ENCODE measurements at regions of chr3 and their contacts with region 1.

Region 1: GRCh38 chr3:160027541-160028195 is 39.0 kb downstream of the IL12A start:
- DNase-seq: no peak
- ATAC-seq: peak; percentile 39; the same call in 2 of the 3 replicates
- H3K4me3 ChIP-seq: no peak overlapping the region
- H3K27ac ChIP-seq: no peak overlapping the region
- H3K4me1 ChIP-seq: no peaks in the 10 kb centered on the region
- H3K27me3 ChIP-seq: peaks cover 0 to 5% of the 10 kb centered on the region in 2 experiments; a peak in 1 of 5 replicates
- CTCF ChIP-seq: no peak
- EP300 ChIP-seq: no peak
- POLR2A ChIP-seq: no peak
- RAD21 ChIP-seq: no peak

Region 2: DNA sequence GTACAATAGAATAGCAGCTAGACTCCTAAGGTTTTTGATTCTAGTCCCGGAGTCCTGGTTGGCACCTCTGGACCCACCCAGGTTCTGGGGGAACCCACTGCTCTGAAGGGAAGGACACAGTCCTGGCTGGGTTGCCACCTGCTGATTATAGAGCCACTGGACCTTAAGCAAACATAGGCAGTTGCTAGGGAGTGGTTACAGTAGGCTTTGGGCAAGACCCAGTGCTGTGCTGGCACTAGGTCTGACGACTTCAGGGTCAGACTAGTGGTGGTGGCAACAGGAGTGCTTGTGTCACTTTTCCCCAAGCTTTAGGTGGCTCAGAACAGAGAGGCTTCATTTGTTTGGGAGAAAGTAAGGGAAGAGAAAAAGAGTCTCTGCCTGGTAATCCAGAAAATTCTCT is 87.7 kb after region 1 on chr3:
- CTCF ChIA-PET with region 1: no interaction called
- POLR2A ChIA-PET with region 1: no interaction called
- in situ Hi-C with region 1: no loop called
- intact Hi-C with region 1: loop called (anchors 5 kb)
- DNase-seq: no peak
- ATAC-seq: peak; percentile 59
- H3K4me3 ChIP-seq: no peak overlapping the region
- H3K27ac ChIP-seq: no peak overlapping the region
- H3K4me1 ChIP-seq: peaks cover 22% of the 10 kb centered on the region
- H3K27me3 ChIP-seq: no peaks in the 10 kb centered on the region
- CTCF ChIP-seq: 0 out of 2 replicates have a peak, but pooled peaks have one; percentile 4
- EP300 ChIP-seq: no peak
- POLR2A ChIP-seq: no peak
- RAD21 ChIP-seq: no peak

Region 3: DNA sequence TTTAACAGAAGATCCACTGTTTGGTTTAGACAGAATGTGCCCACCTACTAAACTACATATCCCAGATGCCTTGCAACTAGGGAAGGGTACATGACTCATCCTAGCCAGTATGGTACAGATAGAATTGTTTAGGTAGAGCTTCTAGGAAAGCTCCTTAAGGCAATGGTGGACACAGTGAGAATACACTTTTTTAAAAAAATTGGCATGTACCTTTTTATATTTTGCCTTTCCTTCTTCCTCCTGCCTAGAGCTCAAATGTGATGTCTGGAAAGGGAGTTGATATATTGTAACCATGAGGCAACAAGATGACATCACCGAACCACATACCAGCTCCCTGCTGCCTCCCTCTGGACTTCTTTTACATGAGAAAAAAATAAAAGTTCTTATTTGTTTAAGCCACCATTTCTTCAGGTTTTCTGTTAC is 183.1 kb after region 1 on chr3:
- CTCF ChIA-PET with region 1: no interaction called
- POLR2A ChIA-PET with region 1: no interaction called
- in situ Hi-C with region 1: no loop called
- intact Hi-C with region 1: loop called (anchors 1 kb)
- DNase-seq: peak; percentile 11
- ATAC-seq: peak; percentile 54; the same call in 2 of the 3 replicates
- H3K4me3 ChIP-seq: no peak overlapping the region
- H3K27ac ChIP-seq: no peak overlapping the region
- H3K4me1 ChIP-seq: no peaks in the 10 kb centered on the region
- H3K27me3 ChIP-seq: 0 out of 5 replicates have a peak, but pooled peaks cover 0 to 3% of the 10 kb centered on the region in 2 experiments
- CTCF ChIP-seq: 0 out of 2 replicates have a peak, but pooled peaks have one; percentile 25
- EP300 ChIP-seq: no peak
- POLR2A ChIP-seq: no peak
- RAD21 ChIP-seq: no peak

Region 4: GRCh38 chr3:160343132-160343531 is 315.5 kb after region 1 on chr3:
- CTCF ChIA-PET with region 1: interaction called, 16 read pairs
- POLR2A ChIA-PET with region 1: no interaction called
- in situ Hi-C with region 1: loop called (anchors 10 kb)
- intact Hi-C with region 1: loop called (anchors 1 kb)
- DNase-seq: peak; percentile 16
- ATAC-seq: no peak
- H3K4me3 ChIP-seq: no peak overlapping the region
- H3K27ac ChIP-seq: no peak overlapping the region
- H3K4me1 ChIP-seq: no peaks in the 10 kb centered on the region
- H3K27me3 ChIP-seq: no peaks in the 10 kb centered on the region
- CTCF ChIP-seq: peak; percentile 41
- EP300 ChIP-seq: no peak
- POLR2A ChIP-seq: no peak
- RAD21 ChIP-seq: no peak

Region 5: GRCh38 chr3:160413613-160414248 is 386.1 kb after region 1 on chr3:
- CTCF ChIA-PET with region 1: interaction called, 22 read pairs
- POLR2A ChIA-PET with region 1: no interaction called
- in situ Hi-C with region 1: loop called (anchors 25 kb)
- intact Hi-C with region 1: loop called (anchors 1 kb)
- DNase-seq: peak; percentile 70
- ATAC-seq: peak; percentile 73
- H3K4me3 ChIP-seq: no peak overlapping the region
- H3K27ac ChIP-seq: no peak overlapping the region
- H3K4me1 ChIP-seq: peaks cover 11% of the 10 kb centered on the region
- H3K27me3 ChIP-seq: no peaks in the 10 kb centered on the region
- CTCF ChIP-seq: peak; percentile 73
- EP300 ChIP-seq: no peak
- POLR2A ChIP-seq: no peak
- RAD21 ChIP-seq: peak; percentile 30; the same call in 1 of the 2 replicates

Measured in HepG2 (cell line).